ENCODE measurements at regions of chr6 and their contacts with region 1.

Region 1: DNA sequence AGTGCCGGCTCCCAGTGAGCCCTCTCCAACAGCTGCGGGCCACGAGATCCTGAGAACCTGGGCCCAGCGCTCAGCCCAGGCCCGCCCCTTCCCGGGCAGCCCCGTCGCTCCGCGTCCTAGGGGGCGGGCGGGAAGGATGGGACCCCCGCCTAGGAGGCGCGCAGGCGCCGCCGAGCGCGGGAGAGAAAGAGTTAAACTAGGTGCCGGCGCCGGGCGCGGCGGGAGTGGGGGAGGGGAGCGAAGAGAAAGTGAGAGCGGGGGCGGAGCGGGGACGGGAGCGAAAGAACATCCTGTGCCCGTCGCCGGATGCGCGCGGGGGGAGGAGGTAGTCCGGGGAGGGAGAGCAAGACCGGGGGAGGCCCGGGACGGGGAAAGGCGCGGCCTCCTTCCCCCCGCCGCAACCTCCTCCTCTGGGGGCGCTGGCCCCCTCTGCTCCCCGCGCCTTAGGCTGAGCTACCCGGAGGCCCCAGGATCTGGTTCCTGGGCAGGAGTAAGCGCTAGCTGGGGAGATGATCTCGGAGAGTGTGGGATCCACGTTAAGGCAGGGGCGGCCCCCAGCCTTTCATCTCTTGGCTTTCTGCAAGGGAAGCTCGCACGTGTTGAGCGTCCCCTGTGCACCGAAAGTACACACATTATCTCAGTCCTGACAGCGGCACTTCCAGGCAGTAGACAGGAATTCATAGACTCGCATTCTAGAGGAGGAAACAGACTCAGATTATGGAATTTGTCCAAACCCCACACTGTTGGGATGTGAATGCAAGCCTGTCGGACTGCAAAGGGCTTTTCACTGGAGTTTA is 4.9 kb upstream of the ARMC12 start:
- DNase-seq: peak; percentile 94
- ATAC-seq: peak; percentile 46
- H3K4me3 Mint-ChIP-seq: peak overlapping the region; percentile 81
- H3K27ac Mint-ChIP-seq: peak overlapping the region; percentile 93
- H3K4me1 Mint-ChIP-seq: peaks cover 57% of the 10 kb centered on the region
- H3K27me3 Mint-ChIP-seq: peaks cover 11% of the 10 kb centered on the region
- CTCF ChIP-seq: no peak

Region 2: GRCh38 chr6:35583893-35584688 is 147.8 kb before region 1 on chr6:
- CTCF ChIA-PET with region 1: interaction called, 40 read pairs
- POLR2A ChIA-PET with region 1: no interaction called
- DNase-seq: peak; percentile 75
- ATAC-seq: peak; percentile 86
- H3K4me3 Mint-ChIP-seq: no peak overlapping the region
- H3K27ac Mint-ChIP-seq: no peak overlapping the region
- H3K4me1 Mint-ChIP-seq: peaks cover 4% of the 10 kb centered on the region; the same call in 1 of the 2 replicates
- H3K27me3 Mint-ChIP-seq: no peaks in the 10 kb centered on the region
- CTCF ChIP-seq: peak; percentile 73

Region 3: DNA sequence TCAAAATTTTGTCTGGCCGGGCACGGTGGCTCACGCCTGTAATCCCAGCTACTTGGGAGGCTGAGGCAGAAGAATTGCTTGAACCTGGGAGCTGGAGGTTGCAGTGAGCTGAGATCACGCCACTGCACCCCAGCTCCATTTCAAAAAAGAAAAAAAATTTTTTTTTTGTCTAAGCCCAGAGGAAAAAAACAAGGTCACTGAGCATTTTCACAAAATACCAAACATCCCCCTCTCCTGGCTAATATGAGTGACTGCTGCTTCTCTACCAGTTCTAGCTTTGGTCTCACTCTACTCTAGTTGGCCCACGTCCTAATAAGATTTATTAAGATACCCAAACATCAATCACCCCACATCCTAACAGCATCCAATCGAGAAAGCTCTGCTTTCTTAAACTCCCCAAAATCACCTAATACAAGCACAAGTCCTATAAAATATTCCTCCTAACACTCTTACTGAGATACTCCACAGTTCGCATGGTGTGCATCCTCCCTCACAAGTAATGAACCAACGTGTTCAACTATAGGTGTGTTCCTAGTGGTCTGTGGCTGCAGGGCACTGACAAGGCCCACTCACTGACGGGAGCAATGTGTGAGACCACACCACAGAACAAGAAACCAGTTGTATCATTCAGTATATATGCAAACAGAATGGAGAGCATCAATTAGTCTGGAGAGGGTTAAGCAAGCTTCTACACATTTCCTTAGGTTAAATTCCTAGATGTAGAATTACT is 107.4 kb before region 1 on chr6:
- CTCF ChIA-PET with region 1: interaction called, 10 read pairs
- POLR2A ChIA-PET with region 1: no interaction called
- DNase-seq: no peak
- ATAC-seq: peak; percentile 30; the same call in 1 of the 2 replicates
- H3K4me3 Mint-ChIP-seq: no peak overlapping the region
- H3K27ac Mint-ChIP-seq: peak overlapping the region; percentile 81
- H3K4me1 Mint-ChIP-seq: no peaks in the 10 kb centered on the region
- H3K27me3 Mint-ChIP-seq: no peaks in the 10 kb centered on the region
- CTCF ChIP-seq: no peak

Region 4: GRCh38 chr6:35688581-35689322 is 43.2 kb before region 1 on chr6 and contains the start of gene FKBP5:
- CTCF ChIA-PET with region 1: interaction called, 10 read pairs
- POLR2A ChIA-PET with region 1: no interaction called
- DNase-seq: peak; percentile 95
- ATAC-seq: peak; percentile 95
- H3K4me3 Mint-ChIP-seq: peak within 1 kb of the TSS; percentile 87
- H3K27ac Mint-ChIP-seq: peak within 1 kb of the TSS; percentile 69
- H3K4me1 Mint-ChIP-seq: peaks cover 20% of the 10 kb centered on the region
- H3K27me3 Mint-ChIP-seq: peaks cover 14% of the 10 kb centered on the region
- CTCF ChIP-seq: no peak
- total RNA-seq, gene FKBP5: 27.0 to 29.4 TPM (median 27.2 TPM) in 3 replicates

Region 5: GRCh38 chr6:35757456-35758123 is 25.7 kb after region 1 on chr6:
- CTCF ChIA-PET with region 1: interaction called, 86 read pairs
- POLR2A ChIA-PET with region 1: interaction called, 4 read pairs
- DNase-seq: peak; percentile 57
- ATAC-seq: peak; percentile 81
- H3K4me3 Mint-ChIP-seq: no peak overlapping the region
- H3K27ac Mint-ChIP-seq: peak overlapping the region; percentile 86
- H3K4me1 Mint-ChIP-seq: peaks cover 50% of the 10 kb centered on the region
- H3K27me3 Mint-ChIP-seq: no peaks in the 10 kb centered on the region
- CTCF ChIP-seq: no peak